B cell (primary cell): ENCODE measurements at regions of chr17 and their contacts with region 1.

Region 1: DNA sequence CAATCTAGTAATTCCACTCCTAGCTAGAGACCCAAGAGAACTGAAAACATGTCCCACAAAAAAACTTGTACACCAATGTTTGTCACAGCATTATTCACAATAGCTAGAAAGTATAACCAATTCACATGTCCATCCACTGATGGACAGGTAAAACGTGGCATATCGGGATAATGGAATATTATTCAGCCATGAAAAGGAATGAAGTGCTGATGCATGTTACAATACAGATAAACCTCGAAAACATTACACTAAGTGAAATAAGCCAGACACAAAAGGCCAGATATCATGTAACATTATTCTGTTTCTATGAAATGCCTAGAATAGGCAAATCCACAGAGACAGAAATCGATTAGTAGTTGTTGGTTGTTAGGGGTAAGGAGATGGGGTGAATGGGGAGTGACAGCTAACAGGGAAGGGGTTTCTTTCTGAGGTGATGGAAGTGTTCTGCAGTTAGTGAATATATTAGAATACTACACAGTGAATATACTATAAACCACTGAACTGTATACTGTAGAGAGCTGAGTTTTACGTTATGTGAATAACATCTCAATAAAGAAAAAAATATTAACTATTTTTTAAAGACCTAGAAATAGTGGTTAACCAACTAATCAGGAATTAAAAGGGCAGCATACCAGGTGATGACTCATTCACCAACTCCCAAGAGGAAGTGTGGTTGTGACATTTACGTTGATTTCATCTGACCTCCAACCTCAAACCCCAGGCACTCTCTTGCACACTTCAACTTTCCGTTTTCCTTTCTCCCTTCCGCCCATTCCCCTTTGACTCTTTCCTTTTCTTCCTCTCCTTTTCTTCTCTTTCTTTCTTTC is 48.6 kb downstream of the GAS7 start:
- DNase-seq: peak; percentile 67
- ATAC-seq: peak; percentile 70
- H3K4me3 ChIP-seq: no peak overlapping the region
- H3K4me3 Mint-ChIP-seq: peak overlapping the region; percentile 80
- H3K27ac ChIP-seq: peak overlapping the region; percentile 38 to 65
- H3K27ac Mint-ChIP-seq: peak overlapping the region; percentile 92
- H3K4me1 ChIP-seq: peaks cover 42 to 50% of the 10 kb centered on the region in 2 donors
- H3K4me1 Mint-ChIP-seq: peaks cover 50% of the 10 kb centered on the region
- H3K27me3 ChIP-seq: no peaks in the 10 kb centered on the region
- H3K27me3 Mint-ChIP-seq: no peaks in the 10 kb centered on the region
- CTCF ChIP-seq: no peak

Region 2: GRCh38 chr17:10041916-10042588 is 107.7 kb before region 1 on chr17:
- CTCF ChIA-PET with region 1: no interaction called
- POLR2A ChIA-PET with region 1: no interaction called
- intact Hi-C with region 1: loop called (anchors 5 kb)
- DNase-seq: peak; percentile 28
- ATAC-seq: peak; percentile 72
- H3K4me3 ChIP-seq: no peak overlapping the region
- H3K4me3 Mint-ChIP-seq: peak overlapping the region; percentile 8
- H3K27ac ChIP-seq: no peak overlapping the region
- H3K27ac Mint-ChIP-seq: peak overlapping the region; percentile 35
- H3K4me1 ChIP-seq: peaks cover 19 to 38% of the 10 kb centered on the region in 2 donors
- H3K4me1 Mint-ChIP-seq: peaks cover 45% of the 10 kb centered on the region
- H3K27me3 ChIP-seq: no peaks in the 10 kb centered on the region
- H3K27me3 Mint-ChIP-seq: no peaks in the 10 kb centered on the region
- CTCF ChIP-seq: no peak

Region 3: GRCh38 chr17:10172241-10172741 is 22.5 kb after region 1 on chr17:
- CTCF ChIA-PET with region 1: interaction called, 4 read pairs
- POLR2A ChIA-PET with region 1: no interaction called
- intact Hi-C with region 1: loop called (anchors 2 kb)
- DNase-seq: peak; percentile 56
- ATAC-seq: peak; percentile 82
- H3K4me3 ChIP-seq: peak overlapping the region in 2 of 5 experiments; percentile 30 to 44
- H3K4me3 Mint-ChIP-seq: peak overlapping the region; percentile 71
- H3K27ac ChIP-seq: peak overlapping the region; percentile 42 to 48
- H3K27ac Mint-ChIP-seq: peak overlapping the region; percentile 69
- H3K4me1 ChIP-seq: peaks cover 23 to 33% of the 10 kb centered on the region in 2 donors
- H3K4me1 Mint-ChIP-seq: peaks cover 35% of the 10 kb centered on the region
- H3K27me3 ChIP-seq: no peaks in the 10 kb centered on the region
- H3K27me3 Mint-ChIP-seq: no peaks in the 10 kb centered on the region
- CTCF ChIP-seq: no peak

Region 4: GRCh38 chr17:10198509-10199253 is 48.9 kb after region 1 on chr17 and contains the start of gene GAS7:
- CTCF ChIA-PET with region 1: no interaction called
- POLR2A ChIA-PET with region 1: no interaction called
- intact Hi-C with region 1: loop called (anchors 5 kb)
- DNase-seq: peak; percentile 46
- ATAC-seq: peak; percentile 72
- H3K4me3 ChIP-seq: peak within 1 kb of the TSS; percentile 31 to 61 (median 53)
- H3K4me3 Mint-ChIP-seq: peak within 1 kb of the TSS; percentile 86
- H3K27ac ChIP-seq: no peak within 1 kb of the TSS
- H3K27ac Mint-ChIP-seq: peak within 1 kb of the TSS; percentile 59
- H3K4me1 ChIP-seq: peaks cover 4 to 11% of the 10 kb centered on the region in 2 donors
- H3K4me1 Mint-ChIP-seq: peaks cover 18% of the 10 kb centered on the region
- H3K27me3 ChIP-seq: peaks cover 0 to 20% (median 8%) of the 10 kb centered on the region in 4 experiments
- H3K27me3 Mint-ChIP-seq: peaks cover 33% of the 10 kb centered on the region
- CTCF ChIP-seq: no peak
- total RNA-seq, gene GAS7: 13.6 and 15.6 TPM in 2 replicates